ENCODE measurements at regions of chr1 and their contacts with region 1.

Region 1: DNA sequence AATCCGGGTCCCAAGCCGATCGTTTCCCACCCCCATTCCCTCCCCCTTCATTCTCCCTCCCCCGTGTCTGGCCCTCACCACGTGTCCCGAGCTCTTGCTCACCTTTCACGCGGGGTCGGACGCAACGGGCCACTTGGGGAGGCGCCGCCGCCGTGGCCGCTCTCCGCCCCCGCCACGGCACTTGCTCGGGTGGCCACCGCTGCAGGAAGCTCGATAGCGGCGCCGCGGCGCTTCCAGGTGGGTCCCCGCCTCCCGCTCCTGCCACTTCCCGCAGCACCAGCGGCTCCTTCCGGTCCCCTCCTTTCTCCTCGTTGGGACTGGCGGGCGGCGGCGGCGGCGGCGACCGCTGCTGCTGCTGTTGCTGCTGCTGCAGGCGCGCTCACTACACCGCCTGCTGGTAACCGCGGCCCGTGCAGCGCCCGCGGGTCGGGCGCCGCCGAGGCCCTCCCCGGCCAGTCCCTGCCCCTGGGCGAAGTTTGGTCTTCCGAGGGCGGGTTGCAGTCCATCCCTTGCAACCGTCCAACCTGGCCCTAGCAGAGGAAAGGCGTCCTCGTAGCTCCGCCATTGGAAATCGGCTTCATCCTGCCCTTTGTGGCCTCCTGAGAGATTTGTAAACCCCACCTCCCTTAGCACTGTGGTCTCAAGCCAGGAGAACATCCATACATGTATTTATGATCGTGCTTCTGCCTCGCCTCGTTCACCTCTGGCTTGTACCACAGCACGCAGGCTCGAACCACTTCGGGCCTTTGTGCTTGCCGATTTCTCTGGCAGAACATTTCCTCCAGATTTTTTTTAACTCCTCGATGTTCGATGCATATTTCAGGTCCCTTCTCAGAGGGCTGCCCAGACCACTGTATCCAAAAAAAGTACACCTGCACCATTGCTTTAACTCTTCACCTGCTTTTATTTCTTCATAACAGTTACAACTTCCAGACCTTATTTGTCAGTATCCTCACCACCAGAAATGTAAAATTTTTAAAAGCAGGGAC is 996 bp upstream of the ZZZ3 start:
- DNase-seq: peak; percentile 94
- H3K4me3 Mint-ChIP-seq: peak overlapping the region; percentile 82
- H3K27ac Mint-ChIP-seq: peak overlapping the region; percentile 90
- H3K4me1 Mint-ChIP-seq: peaks cover 30% of the 10 kb centered on the region
- H3K27me3 Mint-ChIP-seq: no peaks in the 10 kb centered on the region

Region 2: DNA sequence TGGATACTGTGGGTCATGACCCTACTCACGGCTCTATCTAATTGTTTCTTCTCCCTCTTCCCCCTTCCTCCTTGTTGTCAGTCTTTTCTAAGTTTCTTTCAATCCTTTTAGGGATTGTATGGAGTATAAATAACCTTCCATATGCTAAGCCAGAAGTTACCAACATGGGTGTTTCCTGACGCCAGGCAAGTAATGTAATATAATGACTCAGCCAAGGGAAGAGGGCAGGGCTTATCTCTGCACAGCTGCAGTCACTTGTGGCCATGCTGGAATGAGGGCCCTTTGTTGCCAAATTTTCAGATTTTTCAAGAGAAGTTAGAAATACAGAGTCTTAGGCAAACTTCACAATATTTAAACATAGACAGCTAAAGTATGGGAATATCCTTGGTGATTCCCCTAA is 1414.3 kb before region 1 on chr1:
- CTCF ChIA-PET with region 1: no interaction called
- intact Hi-C with region 1: loop called (anchors 10 kb)
- DNase-seq: peak; percentile 47
- H3K4me3 Mint-ChIP-seq: no peak overlapping the region
- H3K27ac Mint-ChIP-seq: peak overlapping the region; percentile 69
- H3K4me1 Mint-ChIP-seq: peaks cover 60% of the 10 kb centered on the region
- H3K27me3 Mint-ChIP-seq: no peaks in the 10 kb centered on the region

Region 3: GRCh38 chr1:77219166-77219887 is 464.1 kb before region 1 on chr1 and contains the start of gene PIGK:
- CTCF ChIA-PET with region 1: no interaction called
- intact Hi-C with region 1: loop called (anchors 1 kb)
- DNase-seq: peak; percentile 95
- H3K4me3 Mint-ChIP-seq: peak within 1 kb of the TSS; percentile 93
- H3K27ac Mint-ChIP-seq: peak within 1 kb of the TSS; percentile 94
- H3K4me1 Mint-ChIP-seq: peaks cover 37% of the 10 kb centered on the region
- H3K27me3 Mint-ChIP-seq: no peaks in the 10 kb centered on the region
- total RNA-seq, gene PIGK: 27.3 to 30.8 TPM

Region 4: DNA sequence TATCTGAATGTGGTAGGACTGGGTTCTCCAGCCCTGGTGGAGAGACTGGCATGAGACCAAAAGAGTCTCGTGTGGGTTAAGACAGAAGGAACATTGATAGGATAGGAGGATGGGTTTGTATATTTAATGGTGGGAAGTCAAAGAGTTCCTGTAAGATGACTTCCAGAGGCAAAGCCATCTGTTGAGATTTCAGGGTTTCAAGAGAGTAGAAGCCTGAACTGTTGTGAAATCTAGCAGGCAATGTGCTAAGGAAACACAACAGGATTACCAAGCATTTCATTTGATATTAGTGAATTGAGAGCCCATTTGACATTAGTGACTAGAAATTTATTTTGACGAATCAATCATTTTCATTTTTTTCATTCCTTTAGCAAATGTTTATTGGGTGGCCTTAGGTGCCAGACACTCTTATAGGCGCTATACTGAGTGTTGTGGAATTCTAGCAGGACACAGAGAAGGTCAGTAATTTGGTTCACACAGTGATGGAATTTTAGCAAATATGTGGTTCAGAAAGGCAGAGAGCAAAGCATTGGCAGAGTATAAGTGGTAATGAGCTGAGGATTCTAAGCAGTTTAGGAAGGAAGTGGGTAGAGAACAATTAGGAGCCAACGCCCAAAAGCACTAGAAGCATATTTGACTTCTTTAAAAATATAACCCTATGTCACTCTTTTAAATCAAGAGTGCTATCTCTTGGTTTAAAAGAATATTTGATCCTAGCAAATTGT is 252.3 kb before region 1 on chr1:
- CTCF ChIA-PET with region 1: no interaction called
- intact Hi-C with region 1: loop called (anchors 2 kb)
- DNase-seq: no peak
- H3K4me3 Mint-ChIP-seq: no peak overlapping the region
- H3K27ac Mint-ChIP-seq: no peak overlapping the region
- H3K4me1 Mint-ChIP-seq: peaks cover 28% of the 10 kb centered on the region
- H3K27me3 Mint-ChIP-seq: no peaks in the 10 kb centered on the region

Region 5: GRCh38 chr1:78004719-78005447 is 321.4 kb after region 1 on chr1 and contains the start of gene DNAJB4:
- CTCF ChIA-PET with region 1: no interaction called
- intact Hi-C with region 1: loop called (anchors 1 kb)
- DNase-seq: peak; percentile 82
- H3K4me3 Mint-ChIP-seq: peak within 1 kb of the TSS; percentile 88
- H3K27ac Mint-ChIP-seq: peak within 1 kb of the TSS; percentile 100
- H3K4me1 Mint-ChIP-seq: peaks cover 39% of the 10 kb centered on the region
- H3K27me3 Mint-ChIP-seq: peaks cover 3% of the 10 kb centered on the region
- total RNA-seq, gene DNAJB4: 9.7 to 10.4 TPM